AG04449 (cell line): ENCODE measurements at regions of chr18 and their contacts with region 1.

Region 1: GRCh38 chr18:11947214-11948191 is 33.8 kb upstream of the IMPA2 start:
- DNase-seq: peak; percentile 94
- H3K4me3 ChIP-seq: peak overlapping the region; percentile 37
- CTCF ChIP-seq: no peak

Region 2: DNA sequence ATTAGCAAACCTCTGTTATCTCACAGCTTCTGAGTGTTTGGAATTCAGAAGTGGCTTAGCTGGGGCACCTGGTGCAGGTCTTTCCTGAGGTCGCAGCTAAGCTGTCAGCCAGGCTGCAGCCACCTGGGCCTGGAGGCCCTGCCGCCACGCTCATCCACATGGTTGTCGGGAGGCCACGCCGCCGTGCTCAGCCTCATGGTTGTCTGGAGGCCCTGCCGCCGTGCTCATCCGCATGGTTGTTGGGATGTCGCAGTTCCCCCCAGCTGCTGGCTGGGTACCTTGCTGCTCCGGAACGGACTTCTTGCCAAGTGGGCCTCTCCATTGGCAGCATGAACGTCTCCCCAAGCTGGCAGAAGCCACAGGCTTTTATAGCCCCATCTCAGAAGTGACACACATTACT is 15.1 kb before region 1 on chr18:
- CTCF ChIA-PET with region 1: interaction called, 138 read pairs
- POLR2A ChIA-PET with region 1: no interaction called
- DNase-seq: no peak
- H3K4me3 ChIP-seq: no peak overlapping the region
- CTCF ChIP-seq: no peak